ENCODE measurements at regions of chr17 and their contacts with region 1.

Region 1: DNA sequence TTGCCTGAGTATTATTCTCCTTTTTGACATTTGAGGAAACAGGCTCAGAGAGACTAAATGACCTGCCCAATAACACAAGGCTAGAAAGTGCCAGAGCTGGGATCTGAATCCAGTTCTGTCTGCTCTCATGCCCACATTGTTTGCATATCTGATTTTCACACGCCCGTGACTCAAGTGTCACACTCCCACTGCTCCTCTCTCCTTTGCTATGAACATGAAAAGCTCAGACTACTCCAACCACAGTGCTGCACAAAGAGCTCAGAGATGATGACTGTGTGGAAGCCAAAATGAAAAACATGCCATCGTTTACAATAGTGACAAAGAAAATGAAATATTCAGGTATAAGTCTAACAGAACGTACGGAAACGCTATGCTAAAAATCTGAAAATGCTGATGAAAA is 107.9 kb downstream of the SMG6 start:
- DNase-seq: peak; percentile 16
- H3K4me3 Mint-ChIP-seq: peak overlapping the region; percentile 1
- H3K27ac Mint-ChIP-seq: peak overlapping the region; percentile 70
- H3K4me1 Mint-ChIP-seq: peaks cover 47% of the 10 kb centered on the region
- H3K27me3 Mint-ChIP-seq: no peaks in the 10 kb centered on the region

Region 2: DNA sequence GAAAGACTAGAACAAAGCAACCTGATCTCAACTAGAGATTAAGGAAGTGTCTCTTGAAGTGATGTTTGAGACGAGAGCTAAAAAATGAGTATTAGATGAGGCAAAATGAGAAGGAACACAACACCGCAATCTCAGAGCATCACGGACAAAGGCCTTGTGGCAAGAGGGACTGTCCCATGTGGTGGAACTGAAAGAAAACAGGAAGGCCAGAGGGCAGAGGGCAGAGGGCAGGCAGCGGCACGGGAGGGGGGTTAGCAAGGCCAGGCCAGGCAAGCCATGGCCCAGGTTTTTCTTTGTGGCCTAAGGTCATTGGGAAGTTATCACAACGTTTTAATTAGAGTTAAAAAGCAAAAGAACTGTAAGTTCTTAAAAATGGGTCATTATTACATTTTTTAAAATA is 343.4 kb before region 1 on chr17:
- intact Hi-C with region 1: no loop called
- DNase-seq: no peak
- H3K4me3 Mint-ChIP-seq: no peak overlapping the region
- H3K27ac Mint-ChIP-seq: no peak overlapping the region
- H3K4me1 Mint-ChIP-seq: peaks cover 27% of the 10 kb centered on the region
- H3K27me3 Mint-ChIP-seq: no peaks in the 10 kb centered on the region

Region 3: DNA sequence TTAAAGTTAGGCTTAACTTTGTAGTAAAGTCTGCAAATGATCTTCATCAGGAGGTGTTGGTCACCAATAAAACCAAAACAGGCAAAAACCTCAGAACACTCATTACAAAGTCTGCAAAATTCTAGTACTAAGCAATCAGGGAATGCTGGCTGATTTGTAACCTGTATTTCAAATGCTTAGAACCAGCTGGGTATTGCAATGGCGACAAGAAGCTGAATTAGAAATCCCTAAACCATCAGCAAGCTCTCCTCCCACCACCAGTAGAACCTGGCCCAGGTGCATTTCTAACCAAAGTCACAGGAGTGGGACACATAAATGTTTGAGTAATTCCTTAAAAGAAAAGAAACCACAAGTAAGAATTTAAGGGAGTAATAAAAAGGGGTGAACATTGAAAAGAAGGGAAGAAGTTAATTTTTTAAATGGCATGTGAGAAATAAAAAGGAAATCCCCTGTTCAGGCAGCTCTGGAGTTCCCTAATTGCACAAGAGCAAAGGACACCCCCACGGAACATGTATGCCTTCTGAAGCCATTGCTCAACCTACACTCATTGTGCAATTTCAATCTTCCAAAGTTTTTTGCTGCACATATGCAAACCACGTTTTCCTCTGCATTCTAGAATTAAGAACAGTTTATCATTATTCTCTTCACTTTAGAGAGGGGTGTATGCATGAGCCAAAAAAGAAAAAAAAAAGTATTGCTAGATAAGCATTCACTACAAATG is 37.9 kb before region 1 on chr17:
- intact Hi-C with region 1: loop called (anchors 1 kb)
- DNase-seq: no peak
- H3K4me3 Mint-ChIP-seq: no peak overlapping the region
- H3K27ac Mint-ChIP-seq: peak overlapping the region; percentile 56
- H3K4me1 Mint-ChIP-seq: peaks cover 25% of the 10 kb centered on the region
- H3K27me3 Mint-ChIP-seq: no peaks in the 10 kb centered on the region

Region 4: DNA sequence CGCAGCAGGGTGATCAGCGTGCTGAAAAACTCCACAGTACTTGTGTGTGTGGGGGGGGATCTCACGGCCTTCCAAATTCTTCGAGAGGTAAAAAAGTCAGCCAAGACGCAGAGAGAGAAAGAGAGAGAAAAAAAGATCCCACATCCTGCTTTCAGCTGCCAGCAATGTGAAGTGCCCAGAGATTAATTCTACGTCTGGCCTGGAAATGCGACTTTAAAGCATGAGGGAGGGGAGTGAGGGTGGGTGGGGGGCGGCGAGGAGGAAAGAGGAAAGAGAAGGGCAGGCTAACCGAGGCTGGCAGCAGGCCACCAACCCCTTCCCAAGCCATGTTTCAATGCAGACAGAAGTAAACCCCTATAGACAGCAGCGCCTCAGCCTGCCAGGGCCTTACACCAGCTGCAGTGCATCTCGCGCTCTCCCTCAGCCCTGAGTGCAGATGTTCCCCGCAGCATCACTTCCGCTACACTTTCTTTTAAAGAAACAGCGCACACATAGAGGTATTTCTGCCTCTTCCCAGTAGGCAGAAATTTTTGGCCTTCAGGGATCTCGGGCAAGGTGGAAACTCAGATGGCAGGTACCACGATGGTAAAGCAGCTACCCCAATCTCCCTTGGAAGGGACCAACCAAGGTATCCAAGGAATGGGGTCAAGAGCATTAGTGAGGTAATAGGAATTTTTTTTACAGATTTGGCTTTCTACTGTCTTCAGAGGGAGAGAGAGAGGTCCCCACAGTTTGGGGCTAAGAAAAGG is 20.1 kb after region 1 on chr17:
- intact Hi-C with region 1: loop called (anchors 1 kb)
- DNase-seq: peak; percentile 69
- H3K4me3 Mint-ChIP-seq: peak overlapping the region; percentile 80
- H3K27ac Mint-ChIP-seq: peak overlapping the region; percentile 96
- H3K4me1 Mint-ChIP-seq: peaks cover 57% of the 10 kb centered on the region
- H3K27me3 Mint-ChIP-seq: no peaks in the 10 kb centered on the region

Region 5: DNA sequence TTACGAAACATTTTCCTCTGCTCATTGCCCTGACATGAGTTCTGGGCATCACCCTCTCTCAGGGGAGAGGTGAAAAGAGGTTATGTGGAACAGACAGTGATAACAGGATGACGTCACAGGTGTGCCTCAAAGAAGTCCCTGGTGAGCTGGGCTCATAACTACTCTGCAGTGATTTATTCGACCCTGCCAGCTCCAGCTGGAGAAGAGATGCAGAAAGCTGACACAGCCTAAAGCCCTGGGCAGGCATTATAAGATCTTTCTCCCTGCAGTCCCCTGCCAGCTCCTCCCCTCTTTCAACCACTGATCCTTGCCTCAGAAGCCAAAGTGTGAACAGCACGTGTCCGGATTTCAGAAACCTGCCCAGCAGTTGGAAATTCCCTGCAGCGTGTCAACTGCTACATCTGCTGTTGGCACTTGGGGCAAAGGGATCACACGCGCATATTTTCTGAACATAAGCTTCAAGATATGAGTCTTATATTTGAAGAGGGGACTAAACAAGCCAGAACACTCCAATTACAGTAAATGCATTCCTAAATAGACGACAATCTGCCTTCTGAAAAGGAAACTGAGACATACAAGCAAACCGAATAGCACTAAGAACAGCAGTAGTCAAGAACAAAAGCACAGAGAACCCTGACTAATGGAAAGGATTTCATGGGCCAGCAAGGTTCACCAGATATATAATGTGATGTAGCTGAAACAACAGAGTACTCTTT is 27.3 kb after region 1 on chr17:
- intact Hi-C with region 1: loop called (anchors 1 kb)
- DNase-seq: peak; percentile 78
- H3K4me3 Mint-ChIP-seq: peak overlapping the region; percentile 65
- H3K27ac Mint-ChIP-seq: peak overlapping the region; percentile 84
- H3K4me1 Mint-ChIP-seq: peaks cover 60% of the 10 kb centered on the region
- H3K27me3 Mint-ChIP-seq: no peaks in the 10 kb centered on the region

Region 6: DNA sequence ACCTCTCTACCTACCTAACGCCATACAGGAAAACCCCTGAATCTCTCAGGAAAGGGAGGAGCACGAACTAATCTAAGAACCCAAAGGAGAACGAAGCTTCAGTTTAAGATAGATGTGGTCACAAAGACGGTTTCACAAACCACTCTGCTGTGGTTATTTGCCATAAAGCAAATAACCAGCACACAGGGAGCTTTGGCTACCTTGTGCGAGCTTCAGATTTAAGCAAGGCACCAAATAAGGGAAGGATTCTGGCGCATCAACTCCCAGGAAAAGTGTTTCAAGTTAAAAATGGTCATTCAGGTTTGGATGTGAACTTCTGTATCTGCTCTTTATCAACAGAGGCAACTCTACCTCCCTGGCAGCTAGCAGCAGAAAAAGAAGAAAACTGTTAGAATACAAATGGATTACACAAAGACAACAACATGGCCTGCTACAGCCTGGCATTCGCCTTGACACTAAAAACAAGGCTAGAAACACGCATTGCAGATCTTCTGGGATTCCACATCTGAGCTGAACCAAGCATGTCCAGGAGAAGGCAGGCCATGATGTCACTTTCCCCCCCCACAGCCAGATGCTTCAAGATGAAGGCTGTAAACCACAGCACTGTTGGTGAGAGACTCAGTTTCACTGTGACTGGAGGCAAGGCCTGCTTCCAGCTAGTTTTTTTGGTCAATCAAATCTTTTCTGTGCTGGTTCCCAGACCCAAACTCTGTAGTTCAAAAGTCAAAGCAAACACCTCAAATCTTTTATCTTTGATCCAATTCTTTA is 64.2 kb after region 1 on chr17:
- intact Hi-C with region 1: loop called (anchors 5 kb)
- DNase-seq: peak; percentile 76
- H3K4me3 Mint-ChIP-seq: peak overlapping the region; percentile 73
- H3K27ac Mint-ChIP-seq: peak overlapping the region; percentile 97
- H3K4me1 Mint-ChIP-seq: peaks cover 67% of the 10 kb centered on the region
- H3K27me3 Mint-ChIP-seq: no peaks in the 10 kb centered on the region

Measured in activated T-helper 1 cell treated with anti-CD3 and anti-CD28 coated beads, Interleukin-12 subunit alpha, Interleukin-12 subunit beta, Interleukin-2, Interleukin-4 antibody, amounts not matched to agents 30 ng/mL and 10 ng/mL and 1 ng/mL, durations not matched to agents 14 hours and 24 hours and 36 hours (primary cell).